SK-N-SH (cell line): ENCODE measurements at regions of chr11 and their contacts with region 1.

Region 1: GRCh38 chr11:77187776-77188632 is 60.0 kb downstream of the MYO7A start:
- DNase-seq: peak; percentile 90
- H3K4me3 ChIP-seq: peak overlapping the region in 1 of 2 experiments; percentile 14; a peak in 1 of 4 replicates
- H3K27ac ChIP-seq: no peak overlapping the region
- H3K4me1 ChIP-seq: no peaks in the 10 kb centered on the region
- H3K27me3 ChIP-seq: no peaks in the 10 kb centered on the region
- CTCF ChIP-seq: peak; percentile 93
- EP300 ChIP-seq: no peak
- RAD21 ChIP-seq: peak; percentile 93

Region 2: GRCh38 chr11:76962583-76963416 is 225.2 kb before region 1 on chr11:
- CTCF ChIA-PET with region 1: no interaction called
- POLR2A ChIA-PET with region 1: no interaction called
- DNase-seq: no peak
- H3K4me3 ChIP-seq: no peak overlapping the region
- H3K27ac ChIP-seq: no peak overlapping the region
- H3K4me1 ChIP-seq: no peaks in the 10 kb centered on the region
- H3K27me3 ChIP-seq: no peaks in the 10 kb centered on the region
- CTCF ChIP-seq: no peak
- EP300 ChIP-seq: no peak
- RAD21 ChIP-seq: no peak

Region 3: DNA sequence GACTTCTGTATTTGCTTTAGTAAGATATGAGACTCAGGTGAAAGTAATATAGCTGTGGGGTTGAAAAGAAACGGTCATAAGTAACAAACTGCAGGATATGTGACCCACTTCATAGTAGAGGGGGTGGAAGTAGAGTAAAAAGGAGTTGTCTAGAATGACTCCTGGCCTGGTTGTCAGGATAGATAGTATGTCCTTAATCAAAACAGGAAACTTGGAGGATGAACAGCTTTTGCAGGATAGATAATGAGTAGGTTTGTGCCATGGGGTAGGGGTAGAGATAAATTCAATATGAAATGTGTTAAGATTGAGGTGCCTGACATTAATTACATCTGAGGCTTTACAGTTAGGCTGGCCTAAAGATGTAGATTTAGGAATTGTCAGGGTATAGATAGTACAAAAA is 200.8 kb before region 1 on chr11:
- CTCF ChIA-PET with region 1: no interaction called
- POLR2A ChIA-PET with region 1: no interaction called
- DNase-seq: no peak
- H3K4me3 ChIP-seq: no peak overlapping the region
- H3K27ac ChIP-seq: no peak overlapping the region
- H3K4me1 ChIP-seq: no peaks in the 10 kb centered on the region
- H3K27me3 ChIP-seq: no peaks in the 10 kb centered on the region
- CTCF ChIP-seq: no peak
- EP300 ChIP-seq: no peak
- RAD21 ChIP-seq: no peak

Region 4: DNA sequence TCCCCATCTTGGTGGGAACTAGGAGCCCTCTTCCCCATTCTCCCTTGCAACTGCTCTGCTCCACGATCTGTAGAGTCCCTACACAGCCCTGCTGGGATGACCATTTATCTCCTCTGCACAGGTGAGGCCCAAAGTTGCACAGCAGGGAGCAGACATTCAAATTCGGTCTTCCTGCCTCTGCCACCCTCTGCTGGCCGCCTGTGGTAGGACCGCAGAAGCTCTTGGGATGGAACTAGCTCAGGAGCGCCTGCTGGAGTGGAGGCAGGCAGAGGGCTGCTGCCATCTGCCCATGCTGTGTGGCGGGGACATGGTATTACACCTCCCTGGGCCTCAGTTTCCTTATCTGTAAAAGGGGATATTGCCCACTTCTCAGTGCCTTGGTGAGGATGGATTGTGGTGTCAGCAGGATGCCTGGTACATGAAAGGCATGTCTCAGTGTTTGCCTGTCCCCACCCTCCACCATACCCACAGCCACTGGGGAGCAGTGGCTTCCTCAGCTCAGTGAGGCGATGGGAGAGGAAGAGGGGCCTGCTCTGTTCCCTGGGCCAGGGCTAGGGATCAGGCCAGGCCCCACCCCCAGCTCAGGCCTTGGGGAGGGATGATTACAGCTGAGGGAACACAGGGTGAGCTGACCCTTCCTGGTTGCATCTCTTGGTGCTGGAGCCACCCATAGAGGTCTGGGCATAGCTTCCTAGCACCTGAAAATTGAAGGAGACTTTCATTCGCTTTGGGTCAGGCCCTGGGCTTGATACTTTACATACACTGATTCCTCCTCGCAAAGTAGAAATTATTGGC is 96.7 kb before region 1 on chr11:
- CTCF ChIA-PET with region 1: interaction called, 18 read pairs
- POLR2A ChIA-PET with region 1: no interaction called
- DNase-seq: peak; percentile 93
- H3K4me3 ChIP-seq: no peak overlapping the region; a peak in 1 of 4 replicates
- H3K27ac ChIP-seq: no peak overlapping the region
- H3K4me1 ChIP-seq: peaks cover 0 to 21% of the 10 kb centered on the region in 2 experiments; a peak in 1 of 4 replicates
- H3K27me3 ChIP-seq: no peaks in the 10 kb centered on the region
- CTCF ChIP-seq: peak; percentile 89
- EP300 ChIP-seq: no peak
- RAD21 ChIP-seq: peak; percentile 95

Region 5: DNA sequence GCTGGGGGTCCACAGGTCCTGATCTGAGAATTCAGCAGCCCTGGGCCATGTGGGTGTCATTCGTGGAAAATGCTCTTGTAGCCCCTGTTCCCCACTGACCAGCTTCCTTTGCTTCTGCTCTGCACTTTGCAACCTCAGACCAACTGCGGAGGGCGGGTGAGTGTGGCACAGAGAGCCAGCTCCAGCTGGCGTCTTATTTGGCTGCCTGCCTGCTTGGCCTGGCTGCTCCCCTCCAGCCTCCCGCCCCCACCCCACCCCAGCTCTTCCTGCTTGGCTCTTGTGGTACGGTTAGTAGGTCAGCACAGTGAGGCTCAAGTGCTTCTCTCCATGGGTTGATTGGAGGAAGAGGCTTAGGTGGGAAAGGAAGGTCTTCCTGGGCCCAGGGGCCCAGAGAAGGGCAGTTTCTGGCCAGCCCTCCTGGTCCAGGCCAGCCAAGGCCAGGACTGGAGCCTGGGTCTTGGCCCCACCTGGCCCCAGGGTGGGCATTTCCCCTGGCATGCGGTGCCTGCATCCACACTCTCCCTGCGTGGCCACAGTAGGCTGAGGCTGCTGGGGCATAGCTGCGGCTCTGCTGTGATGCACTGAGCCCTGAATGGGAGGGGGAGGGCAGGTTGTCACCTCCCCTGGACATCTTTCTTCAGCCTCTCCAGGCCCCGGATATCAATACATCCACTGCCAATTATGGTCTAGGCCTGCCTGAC is 33.5 kb before region 1 on chr11:
- CTCF ChIA-PET with region 1: interaction called, 15 read pairs
- POLR2A ChIA-PET with region 1: no interaction called
- DNase-seq: no peak
- H3K4me3 ChIP-seq: no peak overlapping the region
- H3K27ac ChIP-seq: no peak overlapping the region
- H3K4me1 ChIP-seq: peaks cover 0 to 13% of the 10 kb centered on the region in 2 experiments; a peak in 1 of 4 replicates
- H3K27me3 ChIP-seq: no peaks in the 10 kb centered on the region
- CTCF ChIP-seq: no peak
- EP300 ChIP-seq: no peak
- RAD21 ChIP-seq: no peak

Region 6: GRCh38 chr11:77175869-77176539 is 12.0 kb before region 1 on chr11:
- CTCF ChIA-PET with region 1: interaction called, 41 read pairs
- POLR2A ChIA-PET with region 1: no interaction called
- DNase-seq: no peak
- H3K4me3 ChIP-seq: no peak overlapping the region
- H3K27ac ChIP-seq: no peak overlapping the region
- H3K4me1 ChIP-seq: no peaks in the 10 kb centered on the region; a peak in 1 of 4 replicates
- H3K27me3 ChIP-seq: no peaks in the 10 kb centered on the region
- CTCF ChIP-seq: no peak
- EP300 ChIP-seq: no peak
- RAD21 ChIP-seq: no peak

Region 7: DNA sequence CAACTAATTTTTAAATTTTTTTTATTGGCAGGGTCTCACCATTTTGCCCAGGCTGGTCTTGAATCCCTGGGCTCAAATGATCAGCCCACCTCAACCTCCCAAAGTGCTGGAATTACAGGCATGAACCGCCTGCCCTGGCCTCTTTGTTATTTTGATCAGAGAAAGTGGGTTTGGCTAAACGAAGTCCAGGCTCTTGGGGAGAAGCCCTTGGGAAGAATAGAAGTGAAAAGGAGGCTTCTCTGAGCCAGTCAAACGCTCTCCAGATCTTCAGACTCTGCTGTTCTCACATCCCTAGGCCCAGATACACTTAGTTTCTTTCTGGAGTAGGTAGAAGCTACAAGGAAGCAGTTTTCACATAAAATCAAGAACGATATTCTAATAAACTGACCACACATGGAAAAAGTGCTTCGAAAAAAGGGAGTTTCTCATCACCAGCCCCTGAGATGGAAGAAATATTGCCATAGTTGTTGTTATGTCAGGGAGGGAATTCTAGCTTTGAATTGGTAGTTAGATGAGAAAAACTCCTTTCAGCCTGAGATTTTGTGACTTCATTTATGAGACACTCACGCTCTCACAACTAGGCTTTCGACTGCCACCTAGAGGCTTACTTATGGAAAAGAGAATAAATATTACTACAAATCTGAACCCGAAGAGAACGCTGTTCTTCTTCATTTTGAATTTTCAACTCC is 360.0 kb after region 1 on chr11:
- CTCF ChIA-PET with region 1: interaction called, 11 read pairs
- POLR2A ChIA-PET with region 1: no interaction called
- DNase-seq: peak; percentile 50
- H3K4me3 ChIP-seq: no peak overlapping the region
- H3K27ac ChIP-seq: no peak overlapping the region
- H3K4me1 ChIP-seq: no peaks in the 10 kb centered on the region
- H3K27me3 ChIP-seq: no peaks in the 10 kb centered on the region
- CTCF ChIP-seq: peak; percentile 77
- EP300 ChIP-seq: no peak
- RAD21 ChIP-seq: peak; percentile 91